Common myeloid progenitor, CD34-positive (primary cell): ENCODE measurements at regions of chr3 and their contacts with region 1.

Region 1: DNA sequence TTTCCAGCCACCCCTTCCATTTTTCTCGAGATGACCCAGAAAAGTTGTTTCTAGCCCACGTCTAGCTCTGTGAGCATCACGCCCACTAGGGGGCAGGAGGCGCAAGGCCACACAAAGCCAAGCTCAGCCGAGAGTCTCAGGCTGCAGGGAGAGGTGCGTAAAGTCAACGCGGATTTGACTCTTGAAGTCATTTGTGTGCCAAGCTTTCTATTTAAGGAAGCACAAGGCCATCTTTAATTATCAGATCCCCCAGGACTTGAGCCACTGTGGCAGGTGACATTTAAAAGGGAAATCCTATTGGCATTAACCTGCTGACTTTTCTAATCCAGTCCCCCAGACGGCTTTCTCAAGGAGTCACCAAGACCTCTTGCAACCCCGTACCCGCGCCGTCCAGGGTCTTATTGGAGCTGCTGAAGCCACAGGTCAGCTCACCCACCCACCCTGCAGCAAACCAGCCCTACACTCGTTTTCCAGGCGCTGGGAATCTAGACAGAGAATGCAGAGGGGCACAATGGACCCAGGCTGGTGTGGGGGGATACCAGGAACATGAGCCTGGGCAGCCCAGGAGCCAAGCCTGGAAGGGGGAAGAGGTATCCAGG is 62.1 kb downstream of the CAPN7 start:
- DNase-seq: peak; percentile 87 to 95 (median 93)
- H3K4me3 ChIP-seq: no peak overlapping the region
- H3K27ac ChIP-seq: no peak overlapping the region
- H3K4me1 ChIP-seq: peaks cover 13 to 62% (median 46%) of the 10 kb centered on the region in 4 experiments
- H3K27me3 ChIP-seq: no peaks in the 10 kb centered on the region

Region 2: DNA sequence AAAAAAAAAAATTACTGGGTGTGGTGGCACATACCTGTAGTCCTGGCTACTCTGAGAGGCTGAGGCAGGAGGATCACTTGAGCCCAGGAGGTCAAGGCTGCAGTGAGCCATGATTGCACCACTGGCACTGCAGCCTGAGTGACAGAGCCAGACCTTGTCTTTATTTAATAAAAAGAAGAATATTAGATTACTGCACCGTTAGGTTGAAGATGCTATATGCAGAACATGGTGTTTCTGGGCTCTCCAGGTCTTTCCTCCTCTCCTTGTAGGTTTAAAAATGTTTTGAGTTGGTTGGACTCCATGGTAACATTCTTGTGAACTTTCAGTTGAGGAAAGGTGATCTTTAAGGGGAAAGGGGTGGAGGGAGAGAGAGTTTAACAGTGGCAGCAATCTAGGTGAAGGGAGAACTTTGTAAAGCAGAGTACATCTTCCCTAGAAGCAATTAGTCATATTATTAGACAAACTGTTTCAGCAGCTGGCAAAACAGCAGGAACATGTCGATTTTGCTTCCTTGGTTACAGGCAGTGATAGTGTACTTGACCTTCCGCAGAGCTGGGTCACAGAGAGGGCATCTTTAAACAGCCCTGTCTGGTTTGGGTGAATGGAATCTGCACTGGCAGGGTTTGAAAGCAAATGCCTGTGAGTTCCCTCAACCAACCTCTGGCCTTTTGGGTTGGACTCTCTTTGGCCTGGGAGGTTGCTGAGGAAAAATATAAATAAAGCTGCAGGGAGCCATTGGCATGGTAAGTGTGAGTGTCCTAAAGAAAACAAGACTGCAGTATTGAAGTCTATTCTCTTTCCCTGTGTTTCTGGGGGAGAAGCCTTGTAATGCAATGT is 278.0 kb before region 1 on chr3:
- CTCF ChIA-PET with region 1: no interaction called
- POLR2A ChIA-PET with region 1: no interaction called
- DNase-seq: no peak
- H3K4me3 ChIP-seq: no peak overlapping the region
- H3K27ac ChIP-seq: no peak overlapping the region
- H3K4me1 ChIP-seq: peaks cover 0 to 12% (median 5%) of the 10 kb centered on the region in 4 experiments
- H3K27me3 ChIP-seq: no peaks in the 10 kb centered on the region

Region 3: GRCh38 chr3:15291589-15292541 is 23.7 kb after region 1 on chr3:
- CTCF ChIA-PET with region 1: interaction called, 14 read pairs
- POLR2A ChIA-PET with region 1: no interaction called
- DNase-seq: peak; percentile 88 to 99 (median 99)
- H3K4me3 ChIP-seq: peak overlapping the region in 2 of 7 experiments; percentile 33 to 52
- H3K27ac ChIP-seq: no peak overlapping the region
- H3K4me1 ChIP-seq: peaks cover 29 to 78% (median 56%) of the 10 kb centered on the region in 4 experiments
- H3K27me3 ChIP-seq: peaks cover 0 to 14% (median 3%) of the 10 kb centered on the region in 5 experiments

Region 4: GRCh38 chr3:15367059-15367458 is 98.9 kb after region 1 on chr3:
- CTCF ChIA-PET with region 1: interaction called, 12 read pairs
- POLR2A ChIA-PET with region 1: interaction called, 3 read pairs
- DNase-seq: no peak
- H3K4me3 ChIP-seq: no peak overlapping the region
- H3K27ac ChIP-seq: no peak overlapping the region
- H3K4me1 ChIP-seq: peaks cover 0 to 7% (median 2%) of the 10 kb centered on the region in 4 experiments
- H3K27me3 ChIP-seq: no peaks in the 10 kb centered on the region

Region 5: GRCh38 chr3:15384510-15385237 is 116.5 kb after region 1 on chr3:
- CTCF ChIA-PET with region 1: interaction called, 135 read pairs
- POLR2A ChIA-PET with region 1: interaction called, 3 read pairs
- DNase-seq: no peak
- H3K4me3 ChIP-seq: no peak overlapping the region
- H3K27ac ChIP-seq: no peak overlapping the region
- H3K4me1 ChIP-seq: peaks cover 0 to 6% (median 0%) of the 10 kb centered on the region in 4 experiments
- H3K27me3 ChIP-seq: no peaks in the 10 kb centered on the region

Region 6: GRCh38 chr3:15405448-15406050 is 137.4 kb after region 1 on chr3:
- CTCF ChIA-PET with region 1: interaction called, 47 read pairs
- POLR2A ChIA-PET with region 1: no interaction called
- DNase-seq: peak; percentile 75 to 89 (median 85)
- H3K4me3 ChIP-seq: no peak overlapping the region
- H3K27ac ChIP-seq: no peak overlapping the region
- H3K4me1 ChIP-seq: peaks cover 0 to 2% (median 0%) of the 10 kb centered on the region in 4 experiments
- H3K27me3 ChIP-seq: no peaks in the 10 kb centered on the region